Ovary (tissue), 10 donors: ENCODE measurements at regions of chr11 and their contacts with region 1.

Region 1: DNA sequence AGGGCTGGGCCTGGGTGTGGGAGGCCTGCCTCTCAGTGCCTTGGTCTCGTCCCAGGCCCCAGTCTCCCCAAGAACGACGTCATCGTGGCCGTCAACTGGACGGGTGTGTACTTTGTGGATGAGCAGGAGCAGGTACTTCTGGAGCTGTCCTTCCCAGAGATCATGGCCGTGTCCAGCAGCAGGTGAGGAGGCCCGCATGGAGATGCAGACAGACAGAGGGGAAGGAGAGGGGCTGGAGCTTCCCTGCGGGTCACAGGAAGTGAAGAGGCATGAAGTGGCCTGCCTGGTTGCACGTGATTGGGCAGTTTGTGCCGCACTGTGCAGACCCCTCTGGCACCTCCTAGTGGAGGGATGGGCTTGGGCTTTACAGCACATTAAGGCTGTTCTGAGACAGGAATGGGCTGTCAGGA is 70.4 kb downstream of the MYO7A start:
- DNase-seq: peak in 4 of 5 donors; percentile 3 to 26 (median 12)
- H3K4me3 ChIP-seq: no peak overlapping the region
- H3K27ac ChIP-seq: no peak overlapping the region
- H3K4me1 ChIP-seq: no peaks in the 10 kb centered on the region
- H3K27me3 ChIP-seq: no peaks in the 10 kb centered on the region
- CTCF ChIP-seq: no peak
- EP300 ChIP-seq: no peak
- POLR2A ChIP-seq: no peak

Region 2: GRCh38 chr11:77036398-77036797 is 162.0 kb before region 1 on chr11:
- intact Hi-C with region 1: loop called in 1 of 4 experiments (anchors 2 kb)
- DNase-seq: no peak
- H3K4me3 ChIP-seq: no peak overlapping the region
- H3K27ac ChIP-seq: no peak overlapping the region
- H3K4me1 ChIP-seq: peaks cover 3% of the 10 kb centered on the region
- H3K27me3 ChIP-seq: no peaks in the 10 kb centered on the region
- CTCF ChIP-seq: no peak
- EP300 ChIP-seq: no peak
- POLR2A ChIP-seq: no peak

Region 3: DNA sequence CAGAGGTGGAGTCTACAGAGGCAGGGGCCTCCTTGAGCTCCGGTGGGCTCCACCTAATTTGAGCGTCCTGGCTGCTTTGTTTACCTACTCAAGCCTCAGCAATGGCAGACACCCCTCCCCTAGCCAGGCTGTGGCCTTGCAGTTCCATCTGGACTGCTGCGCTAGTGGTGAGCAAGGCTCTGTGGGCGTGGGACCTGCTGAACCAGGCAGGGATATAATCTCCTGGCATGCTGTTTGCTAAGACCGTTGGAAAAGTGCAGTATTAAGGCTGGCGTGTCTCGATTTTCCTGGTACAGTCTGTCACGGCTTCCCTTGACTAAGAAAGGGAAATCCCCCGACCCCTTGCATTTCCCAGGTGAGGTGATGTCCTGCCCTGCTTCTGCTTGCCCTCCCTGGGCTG is 25.4 kb after region 1 on chr11:
- intact Hi-C with region 1: no loop called
- DNase-seq: no peak
- H3K4me3 ChIP-seq: no peak overlapping the region
- H3K27ac ChIP-seq: no peak overlapping the region
- H3K4me1 ChIP-seq: no peaks in the 10 kb centered on the region
- H3K27me3 ChIP-seq: no peaks in the 10 kb centered on the region
- CTCF ChIP-seq: no peak
- EP300 ChIP-seq: no peak
- POLR2A ChIP-seq: no peak

Region 4: DNA sequence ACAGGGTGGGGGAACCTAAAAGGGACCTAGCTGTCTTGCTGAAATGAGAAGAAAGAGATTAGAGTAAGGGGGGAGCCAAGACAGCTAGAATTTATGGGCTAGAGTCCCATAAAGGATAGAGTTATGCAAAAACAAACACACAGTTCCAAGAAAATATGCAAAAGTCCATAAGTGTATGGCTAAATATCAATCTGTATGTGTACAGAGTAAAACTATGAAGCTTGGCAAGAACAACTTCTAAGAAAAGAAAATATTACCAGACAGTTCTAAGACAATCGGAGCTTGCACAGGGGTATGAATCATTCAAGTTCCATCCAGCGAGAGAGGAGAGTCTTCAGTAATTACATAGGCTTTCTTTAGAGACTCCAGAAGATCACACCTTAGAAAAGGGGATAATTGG is 61.2 kb after region 1 on chr11:
- intact Hi-C with region 1: no loop called
- DNase-seq: no peak
- H3K4me3 ChIP-seq: no peak overlapping the region
- H3K27ac ChIP-seq: no peak overlapping the region
- H3K4me1 ChIP-seq: no peaks in the 10 kb centered on the region
- H3K27me3 ChIP-seq: no peaks in the 10 kb centered on the region
- CTCF ChIP-seq: no peak
- EP300 ChIP-seq: no peak
- POLR2A ChIP-seq: no peak

Region 5: DNA sequence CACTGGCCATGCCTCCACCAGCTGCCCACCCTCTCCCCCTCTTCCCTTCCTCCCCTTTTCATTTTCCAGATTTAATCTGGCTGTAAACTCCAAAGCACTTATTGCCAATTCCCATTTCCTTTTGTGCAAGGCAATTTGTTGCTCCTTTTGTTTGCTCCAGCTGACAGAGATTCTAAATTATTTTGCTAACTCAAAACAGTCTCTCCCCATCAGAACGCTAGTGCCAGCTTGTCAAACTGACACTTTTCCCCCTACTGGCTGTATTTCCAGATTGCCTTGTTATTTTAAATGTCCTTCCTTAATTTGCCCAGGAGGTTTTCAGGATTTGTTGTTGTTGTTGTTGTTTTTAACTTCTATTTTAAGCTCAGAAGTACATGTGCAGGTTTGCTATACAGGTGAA is 332.4 kb after region 1 on chr11:
- intact Hi-C with region 1: loop called in 1 of 4 experiments (anchors 10 kb)
- DNase-seq: no peak
- H3K4me3 ChIP-seq: no peak overlapping the region
- H3K27ac ChIP-seq: no peak overlapping the region
- H3K4me1 ChIP-seq: no peaks in the 10 kb centered on the region
- H3K27me3 ChIP-seq: no peaks in the 10 kb centered on the region
- CTCF ChIP-seq: no peak
- EP300 ChIP-seq: no peak
- POLR2A ChIP-seq: no peak

Region 6: GRCh38 chr11:77542296-77542695 is 343.9 kb after region 1 on chr11:
- intact Hi-C with region 1: loop called in 2 of 4 experiments (anchors 5 to 10 kb)
- DNase-seq: no peak
- H3K4me3 ChIP-seq: no peak overlapping the region
- H3K27ac ChIP-seq: no peak overlapping the region
- H3K4me1 ChIP-seq: no peaks in the 10 kb centered on the region
- H3K27me3 ChIP-seq: no peaks in the 10 kb centered on the region
- CTCF ChIP-seq: no peak
- EP300 ChIP-seq: no peak
- POLR2A ChIP-seq: no peak